Naive thymus-derived CD8-positive, alpha-beta T cell (primary cell): ENCODE measurements at regions of chr16 and their contacts with region 1.

Region 1: GRCh38 chr16:1610276-1611017 is 1.4 kb downstream of the IFT140 start:
- DNase-seq: peak; percentile 86 to 93 (median 92)
- ATAC-seq: peak; percentile 60 to 67
- H3K4me3 Mint-ChIP-seq: peak overlapping the region; percentile 74 to 94 (median 83)
- H3K27ac Mint-ChIP-seq: peak overlapping the region; percentile 59 to 99 (median 82)
- H3K4me1 Mint-ChIP-seq: peaks cover 19 to 42% (median 35%) of the 10 kb centered on the region in 4 donors
- H3K27me3 Mint-ChIP-seq: peaks cover 0 to 10% (median 0%) of the 10 kb centered on the region in 5 donors

Region 2: DNA sequence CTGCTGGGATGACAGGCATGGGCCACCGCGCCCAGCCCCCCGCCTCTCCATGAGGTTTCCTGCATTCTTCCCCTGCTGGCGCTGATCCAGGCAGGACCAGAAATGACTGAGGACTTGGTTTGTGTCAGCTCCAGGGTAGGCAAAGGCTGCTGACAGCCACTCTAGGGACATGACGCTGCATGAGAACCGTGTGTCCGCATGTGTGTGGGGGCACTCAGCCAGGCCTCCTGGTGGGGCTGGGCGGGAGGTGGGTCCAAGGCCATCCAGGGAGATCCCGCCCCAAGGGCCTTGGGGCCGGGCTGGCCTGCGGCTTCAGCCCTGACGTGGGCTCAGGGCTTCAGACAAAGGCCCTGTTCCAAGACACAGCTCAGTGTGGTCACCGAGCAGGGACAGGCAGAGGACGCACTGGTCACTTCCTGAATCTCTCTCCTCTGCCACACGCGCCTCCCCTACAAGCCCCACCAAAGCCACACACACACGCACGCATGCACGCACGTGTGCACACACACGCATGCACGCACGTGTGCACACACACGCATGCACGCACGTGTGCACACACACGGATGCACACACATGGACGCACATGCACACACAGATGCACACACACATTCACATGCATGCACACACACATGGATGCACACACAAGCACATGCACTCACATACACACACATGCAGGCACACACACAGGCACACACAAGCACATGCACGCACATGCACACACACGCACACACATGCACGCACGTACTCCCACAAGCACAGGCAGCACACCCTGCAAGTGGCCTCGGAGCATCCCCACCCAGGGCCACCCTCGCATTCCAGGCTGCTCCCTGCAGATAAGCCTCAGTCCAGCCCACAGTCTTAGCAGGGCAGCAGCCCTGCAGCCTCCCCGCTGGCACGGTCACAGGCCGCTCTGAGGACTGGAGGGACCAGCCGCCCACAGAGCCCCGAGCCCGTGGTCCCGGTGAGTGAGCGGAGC is 82.3 kb before region 1 on chr16:
- POLR2A ChIA-PET with region 1: interaction called, 17 read pairs
- DNase-seq: no peak
- ATAC-seq: no peak
- H3K4me3 Mint-ChIP-seq: peak overlapping the region in 7 of 10 donors; percentile 52 to 88 (median 79)
- H3K27ac Mint-ChIP-seq: peak overlapping the region; percentile 72 to 94 (median 85)
- H3K4me1 Mint-ChIP-seq: peaks cover 11 to 52% (median 35%) of the 10 kb centered on the region in 4 donors
- H3K27me3 Mint-ChIP-seq: no peaks in the 10 kb centered on the region

Region 3: DNA sequence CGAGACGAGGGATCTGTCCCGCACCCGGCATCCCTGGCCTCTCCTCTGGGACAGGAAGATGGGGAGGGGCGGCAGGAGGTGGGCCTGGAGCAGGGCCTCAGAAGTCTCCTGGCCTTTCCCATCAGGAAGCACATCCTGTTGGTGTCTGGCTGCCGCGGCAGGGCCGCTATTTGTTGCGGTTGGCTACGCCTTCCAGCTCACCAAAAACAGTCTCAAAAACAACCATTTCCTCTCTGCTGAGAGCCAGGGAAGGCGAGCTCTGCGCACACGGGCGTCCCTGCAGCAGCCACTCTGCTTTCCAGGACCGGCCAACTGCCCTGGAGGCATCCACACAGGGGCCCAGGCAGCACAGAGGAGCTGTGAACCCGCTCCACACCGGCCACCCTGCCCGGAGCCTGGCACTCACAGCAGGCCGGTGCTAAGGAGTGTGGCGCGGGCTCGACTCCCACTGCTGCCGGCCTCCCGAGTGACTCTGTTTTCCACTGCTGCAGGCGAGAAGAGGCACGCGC is 77.0 kb before region 1 on chr16 and contains the start of gene TMEM204:
- POLR2A ChIA-PET with region 1: interaction called, 25 read pairs
- DNase-seq: peak in 8 of 10 donors; percentile 15 to 73 (median 50)
- ATAC-seq: peak; percentile 57 to 59
- H3K4me3 Mint-ChIP-seq: peak within 1 kb of the TSS; percentile 96 to 99 (median 98)
- H3K27ac Mint-ChIP-seq: peak within 1 kb of the TSS; percentile 90 to 97 (median 94)
- H3K4me1 Mint-ChIP-seq: peaks cover 25 to 54% (median 48%) of the 10 kb centered on the region in 4 donors
- H3K27me3 Mint-ChIP-seq: no peaks in the 10 kb centered on the region
- polyA plus RNA-seq, gene TMEM204: 95.9 to 135 (median 125) TPM